HepG2 (cell line): ENCODE measurements at regions of chr19 and their contacts with region 1.

Region 1: DNA sequence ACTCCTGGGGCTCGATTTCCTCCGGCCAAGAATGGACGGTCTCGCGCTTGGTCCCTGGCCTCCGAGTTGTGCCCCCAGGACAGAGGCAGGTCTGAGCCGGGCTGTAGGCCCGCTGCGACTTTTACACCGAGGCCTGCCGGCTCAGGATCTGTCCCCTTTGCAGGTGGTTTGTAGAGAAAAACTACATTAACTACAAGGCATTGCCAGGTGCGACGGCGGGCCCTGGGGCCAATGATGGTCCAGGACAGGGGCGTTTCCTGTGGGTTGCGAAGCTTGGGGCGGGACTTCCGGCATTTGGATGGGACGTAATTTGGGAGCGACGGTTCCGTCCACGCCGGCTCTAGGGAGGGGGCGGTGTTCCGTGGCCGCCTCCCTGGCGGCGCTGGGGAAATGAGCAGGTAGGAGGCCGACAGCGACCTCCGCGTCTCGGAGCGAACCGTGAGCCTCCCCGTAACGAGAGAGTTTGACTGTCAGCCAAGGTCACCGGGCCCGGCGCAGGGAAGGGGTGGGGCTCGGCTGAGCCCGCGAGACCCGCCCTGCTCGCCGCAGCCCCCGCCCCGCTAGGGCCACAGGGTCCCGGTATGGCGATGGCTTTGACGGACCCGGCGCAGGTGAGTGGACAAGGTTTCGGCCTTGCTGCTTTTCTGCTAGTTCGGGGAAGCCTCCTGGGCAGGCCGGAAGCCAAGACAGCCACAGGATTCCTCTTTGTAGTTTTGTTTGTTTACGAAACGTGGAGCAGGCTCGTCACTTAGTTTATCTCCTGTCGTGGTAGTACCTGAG is at the start of gene ZNF805:
- DNase-seq: peak; percentile 90
- ATAC-seq: peak; percentile 93
- H3K4me3 ChIP-seq: peak within 1 kb of the TSS; percentile 85 to 92 (median 90)
- H3K27ac ChIP-seq: peak within 1 kb of the TSS; percentile 84
- H3K4me1 ChIP-seq: peaks cover 36% of the 10 kb centered on the region
- H3K27me3 ChIP-seq: no peaks in the 10 kb centered on the region; a peak in 1 of 5 replicates
- CTCF ChIP-seq: peak; percentile 41
- EP300 ChIP-seq: no peak
- POLR2A ChIP-seq: peak; percentile 68 to 76; a peak in 3 of 4 replicates
- RAD21 ChIP-seq: 0 out of 2 replicates have a peak, but pooled peaks have one; percentile 25
- total RNA-seq, gene ZNF805: 12.8 and 21.8 TPM in 2 replicates

Region 2: DNA sequence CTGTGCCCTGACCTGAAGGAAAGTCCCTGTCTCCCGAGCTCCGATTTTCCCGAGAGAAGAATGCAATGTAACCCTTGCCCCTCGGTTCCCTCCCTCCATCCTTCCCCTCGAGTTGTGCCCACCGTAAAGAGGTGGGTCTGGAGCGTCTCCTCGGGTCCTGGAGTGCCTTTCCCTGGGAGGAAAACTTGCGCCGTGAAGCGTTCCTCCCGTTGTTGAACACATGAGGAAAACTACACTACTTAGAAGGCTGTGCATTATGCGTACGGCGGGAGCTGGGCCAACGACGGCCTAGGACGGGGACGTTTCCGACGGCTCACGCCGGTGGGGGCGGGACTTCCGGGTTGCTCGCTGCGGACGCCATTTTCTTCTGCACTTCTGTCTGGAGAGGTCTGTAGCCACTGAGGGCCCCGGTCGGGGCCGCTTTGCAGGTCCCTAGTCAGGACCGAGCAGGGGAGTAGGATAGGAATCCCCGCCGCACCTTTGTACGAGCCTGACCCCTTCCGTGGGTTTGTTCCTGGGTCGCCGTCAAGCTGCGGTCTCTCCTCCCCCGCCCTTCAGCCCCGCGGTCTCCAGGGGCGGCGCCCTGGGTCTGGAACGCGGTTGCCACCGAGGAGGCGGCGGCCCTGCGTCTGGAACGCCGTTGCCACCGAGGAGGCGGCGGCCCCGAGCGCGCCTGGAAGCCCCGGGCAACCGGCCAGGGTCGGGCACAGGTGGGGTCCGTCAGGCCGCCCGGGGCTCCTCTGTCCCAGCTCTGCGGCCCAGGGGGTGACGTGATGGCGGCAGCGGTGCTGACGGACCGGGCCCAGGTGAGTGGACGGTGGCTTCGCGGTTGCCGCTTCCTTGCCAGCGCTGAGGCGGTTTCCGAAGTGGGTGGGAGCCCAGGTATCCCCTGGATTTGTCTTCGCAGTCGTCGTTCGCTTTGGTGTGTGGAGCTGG is 49.1 kb before region 1 on chr19 and contains the start of gene ZNF264:
- CTCF ChIA-PET with region 1: no interaction called
- POLR2A ChIA-PET with region 1: no interaction called
- in situ Hi-C with region 1: no loop called
- intact Hi-C with region 1: loop called (anchors 1 kb)
- DNase-seq: peak; percentile 62
- ATAC-seq: peak; percentile 98
- H3K4me3 ChIP-seq: peak within 1 kb of the TSS; percentile 86 to 100 (median 98)
- H3K27ac ChIP-seq: peak within 1 kb of the TSS; percentile 78
- H3K4me1 ChIP-seq: peaks cover 22% of the 10 kb centered on the region
- H3K27me3 ChIP-seq: no peaks in the 10 kb centered on the region; a peak in 1 of 5 replicates
- CTCF ChIP-seq: peak; percentile 15; the same call in 1 of the 2 replicates
- EP300 ChIP-seq: no peak
- POLR2A ChIP-seq: peak; percentile 66 to 70
- RAD21 ChIP-seq: peak; percentile 22; the same call in 1 of the 2 replicates
- total RNA-seq, gene ZNF264: 17.6 and 24.7 TPM in 2 replicates

Region 3: GRCh38 chr19:57279418-57280066 is 39.0 kb after region 1 on chr19:
- CTCF ChIA-PET with region 1: no interaction called
- POLR2A ChIA-PET with region 1: interaction called, 7 read pairs
- in situ Hi-C with region 1: loop called (anchors 5 kb)
- intact Hi-C with region 1: loop called (anchors 1 kb)
- DNase-seq: peak; percentile 95
- ATAC-seq: peak; percentile 94
- H3K4me3 ChIP-seq: peak overlapping the region; percentile 79 to 95 (median 87)
- H3K27ac ChIP-seq: peak overlapping the region; percentile 98
- H3K4me1 ChIP-seq: peaks cover 61% of the 10 kb centered on the region
- H3K27me3 ChIP-seq: no peaks in the 10 kb centered on the region; a peak in 1 of 5 replicates
- CTCF ChIP-seq: peak; percentile 78
- EP300 ChIP-seq: 0 out of 4 replicates have a peak, but pooled peaks of 1 of the 2 experiments have one; percentile 48
- POLR2A ChIP-seq: peak; percentile 81 to 93; a peak in 3 of 4 replicates
- RAD21 ChIP-seq: peak; percentile 11; the same call in 1 of the 2 replicates